Spleen (tissue), 13 donors: ENCODE measurements at regions of chr6 and their contacts with region 1.

Region 1: DNA sequence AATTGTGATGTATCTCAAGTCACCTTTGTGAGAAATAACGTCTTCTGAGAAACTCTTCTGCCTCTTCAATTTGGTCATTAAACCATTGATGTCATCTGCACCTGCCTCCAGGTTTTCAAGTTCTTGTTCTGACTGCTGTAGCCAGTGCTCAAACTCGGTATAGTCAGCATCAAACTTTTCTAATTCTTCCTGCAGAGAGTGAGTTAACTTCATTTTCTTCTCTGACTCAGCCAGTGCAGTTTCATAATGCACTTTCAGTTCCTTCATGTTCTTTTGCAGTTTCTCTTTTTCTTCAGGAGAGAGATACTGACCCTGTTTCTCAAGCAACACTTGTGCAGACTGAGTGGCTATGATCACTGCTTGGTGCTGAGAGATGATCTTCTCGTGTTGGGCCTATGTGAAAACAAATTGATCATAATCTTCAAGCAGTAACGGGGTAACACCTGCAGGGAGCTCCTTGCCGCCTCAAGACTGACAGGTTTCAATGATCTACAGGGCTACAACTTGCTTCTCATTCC is 48.8 kb downstream of the DST start:
- DNase-seq: no peak
- H3K4me3 ChIP-seq: peak overlapping the region in 1 of 8 donors; percentile 38
- H3K27ac ChIP-seq: peak overlapping the region in 4 of 8 donors; percentile 20 to 45 (median 29)
- H3K4me1 ChIP-seq: peaks cover 0 to 33% (median 24%) of the 10 kb centered on the region in 6 donors
- H3K27me3 ChIP-seq: no peaks in the 10 kb centered on the region
- CTCF ChIP-seq: no peak
- POLR2A ChIP-seq: no peak

Region 2: DNA sequence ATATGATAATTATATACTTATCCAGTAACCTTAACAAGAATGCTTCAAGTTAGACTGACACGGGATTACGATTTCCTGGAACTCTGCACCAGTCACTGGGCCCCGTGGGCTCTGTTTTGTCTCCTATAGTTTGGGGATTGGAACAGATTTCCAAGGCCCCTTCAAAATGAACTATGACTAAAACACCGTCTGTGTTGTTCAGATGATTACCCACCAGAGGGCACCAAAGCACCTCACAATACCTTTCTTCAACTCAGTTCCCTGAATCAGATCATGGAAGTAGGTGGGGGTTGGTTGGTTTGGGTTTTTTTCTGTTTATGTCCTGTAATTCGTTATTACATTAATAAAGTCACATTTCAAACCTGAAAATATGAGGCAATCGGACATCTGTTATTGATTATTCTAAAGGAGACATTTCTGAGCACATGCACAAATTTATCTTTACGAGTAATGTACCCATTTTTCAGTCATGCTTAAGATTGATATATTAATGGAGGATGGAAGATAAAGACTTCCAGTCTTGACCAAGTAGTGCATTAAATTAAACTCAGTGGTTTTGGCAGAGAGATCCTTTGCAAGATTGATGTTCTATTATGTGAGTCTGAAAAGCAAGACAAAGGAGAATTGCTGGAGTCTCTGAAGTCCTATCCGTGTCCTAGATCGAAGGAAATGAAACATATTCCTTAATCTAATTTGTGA is 234.5 kb before region 1 on chr6:
- intact Hi-C with region 1: loop called (anchors 5 kb)
- DNase-seq: no peak
- H3K4me3 ChIP-seq: no peak overlapping the region
- H3K27ac ChIP-seq: no peak overlapping the region
- H3K4me1 ChIP-seq: no peaks in the 10 kb centered on the region
- H3K27me3 ChIP-seq: no peaks in the 10 kb centered on the region
- CTCF ChIP-seq: peak; percentile 49 to 91 (median 75)
- POLR2A ChIP-seq: no peak

Region 3: DNA sequence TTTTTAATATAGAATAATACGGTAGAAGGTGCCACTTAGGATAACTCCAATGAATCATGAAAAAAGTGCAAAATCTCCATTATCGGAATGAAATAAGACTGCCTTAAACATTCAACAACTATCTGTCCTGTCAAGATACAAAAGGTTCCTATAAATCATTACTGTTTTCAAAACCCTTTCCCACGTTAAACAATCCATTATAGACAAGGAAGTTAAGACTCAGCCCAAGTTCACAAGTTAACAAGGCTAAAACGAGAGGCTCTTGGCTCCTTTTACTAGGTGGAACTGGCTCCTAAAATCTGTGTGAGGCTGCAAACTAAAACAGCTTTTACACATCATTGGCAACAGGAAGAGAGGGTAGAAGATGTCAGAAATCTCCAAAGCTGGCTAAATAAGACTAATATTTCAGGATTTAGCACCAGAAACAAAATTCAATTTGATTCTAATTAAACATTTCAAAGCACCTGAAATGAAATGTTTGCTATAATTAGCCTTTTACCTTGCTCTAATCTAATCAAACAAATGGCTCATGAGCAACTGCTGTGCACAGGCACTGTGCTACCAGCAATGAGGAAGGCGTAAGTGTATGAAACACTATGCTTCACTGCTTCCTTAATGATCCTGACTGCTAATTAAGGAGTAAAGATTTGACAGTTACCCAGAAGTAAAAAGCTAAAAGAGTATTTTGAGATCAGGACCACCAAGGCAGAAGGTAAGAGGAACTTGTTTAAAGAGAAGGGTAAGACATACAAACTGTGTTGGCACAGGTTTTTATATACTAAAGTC is 60.9 kb before region 1 on chr6:
- intact Hi-C with region 1: no loop called
- DNase-seq: no peak
- H3K4me3 ChIP-seq: no peak overlapping the region
- H3K27ac ChIP-seq: no peak overlapping the region
- H3K4me1 ChIP-seq: no peaks in the 10 kb centered on the region
- H3K27me3 ChIP-seq: no peaks in the 10 kb centered on the region
- CTCF ChIP-seq: no peak
- POLR2A ChIP-seq: no peak